Activated CD4-positive, alpha-beta memory T cell treated with anti-CD3 and anti-CD28 coated beads for 36 hours (primary cell): ENCODE measurements at regions of chr5 and their contacts with region 1.

Region 1: GRCh38 chr5:113378959-113379541 is 55.7 kb downstream of the TSSK1B start:
- DNase-seq: peak; percentile 74
- H3K4me3 Mint-ChIP-seq: no peak overlapping the region
- H3K27ac Mint-ChIP-seq: no peak overlapping the region
- H3K4me1 Mint-ChIP-seq: peaks cover 27% of the 10 kb centered on the region
- H3K27me3 Mint-ChIP-seq: peaks cover 5% of the 10 kb centered on the region

Region 2: DNA sequence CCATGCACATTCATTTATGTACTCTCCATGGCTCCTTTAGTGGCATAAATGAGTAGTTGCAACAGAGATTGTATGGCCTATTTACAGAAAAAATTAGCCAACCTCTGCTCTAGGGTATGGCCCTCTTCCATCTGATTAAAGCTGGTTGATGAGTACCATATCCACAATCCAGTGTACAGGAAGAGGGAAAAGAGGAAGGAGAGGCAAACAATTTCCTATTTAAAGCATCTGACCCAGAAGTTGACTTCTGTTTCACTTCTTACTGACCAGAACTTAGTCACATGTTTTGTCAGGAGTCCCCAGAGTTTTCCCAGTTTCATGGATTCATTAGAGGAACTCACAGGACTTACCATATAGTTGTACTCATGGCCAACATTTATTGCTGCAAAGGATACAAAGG is 1798.1 kb before region 1 on chr5:
- CTCF ChIA-PET with region 1: no interaction called
- POLR2A ChIA-PET with region 1: no interaction called
- intact Hi-C with region 1: no loop called
- DNase-seq: no peak
- H3K4me3 Mint-ChIP-seq: no peak overlapping the region
- H3K27ac Mint-ChIP-seq: no peak overlapping the region
- H3K4me1 Mint-ChIP-seq: no peaks in the 10 kb centered on the region
- H3K27me3 Mint-ChIP-seq: peaks cover 11% of the 10 kb centered on the region

Region 3: GRCh38 chr5:113336975-113337374 is 42.1 kb before region 1 on chr5:
- CTCF ChIA-PET with region 1: interaction called, 4 read pairs
- POLR2A ChIA-PET with region 1: no interaction called
- intact Hi-C with region 1: loop called (anchors 2 kb)
- DNase-seq: no peak
- H3K4me3 Mint-ChIP-seq: no peak overlapping the region
- H3K27ac Mint-ChIP-seq: no peak overlapping the region
- H3K4me1 Mint-ChIP-seq: peaks cover 4% of the 10 kb centered on the region
- H3K27me3 Mint-ChIP-seq: no peaks in the 10 kb centered on the region

Region 4: GRCh38 chr5:113390224-113390623 is 11.2 kb after region 1 on chr5:
- CTCF ChIA-PET with region 1: interaction called, 13 read pairs
- POLR2A ChIA-PET with region 1: no interaction called
- intact Hi-C with region 1: no loop called
- DNase-seq: no peak
- H3K4me3 Mint-ChIP-seq: no peak overlapping the region
- H3K27ac Mint-ChIP-seq: no peak overlapping the region
- H3K4me1 Mint-ChIP-seq: no peaks in the 10 kb centered on the region
- H3K27me3 Mint-ChIP-seq: peaks cover 13% of the 10 kb centered on the region

Region 5: GRCh38 chr5:113546703-113547183 is 167.7 kb after region 1 on chr5:
- CTCF ChIA-PET with region 1: no interaction called
- POLR2A ChIA-PET with region 1: no interaction called
- intact Hi-C with region 1: no loop called
- DNase-seq: no peak
- H3K4me3 Mint-ChIP-seq: no peak overlapping the region
- H3K27ac Mint-ChIP-seq: no peak overlapping the region
- H3K4me1 Mint-ChIP-seq: peaks cover 10% of the 10 kb centered on the region
- H3K27me3 Mint-ChIP-seq: no peaks in the 10 kb centered on the region

Region 6: DNA sequence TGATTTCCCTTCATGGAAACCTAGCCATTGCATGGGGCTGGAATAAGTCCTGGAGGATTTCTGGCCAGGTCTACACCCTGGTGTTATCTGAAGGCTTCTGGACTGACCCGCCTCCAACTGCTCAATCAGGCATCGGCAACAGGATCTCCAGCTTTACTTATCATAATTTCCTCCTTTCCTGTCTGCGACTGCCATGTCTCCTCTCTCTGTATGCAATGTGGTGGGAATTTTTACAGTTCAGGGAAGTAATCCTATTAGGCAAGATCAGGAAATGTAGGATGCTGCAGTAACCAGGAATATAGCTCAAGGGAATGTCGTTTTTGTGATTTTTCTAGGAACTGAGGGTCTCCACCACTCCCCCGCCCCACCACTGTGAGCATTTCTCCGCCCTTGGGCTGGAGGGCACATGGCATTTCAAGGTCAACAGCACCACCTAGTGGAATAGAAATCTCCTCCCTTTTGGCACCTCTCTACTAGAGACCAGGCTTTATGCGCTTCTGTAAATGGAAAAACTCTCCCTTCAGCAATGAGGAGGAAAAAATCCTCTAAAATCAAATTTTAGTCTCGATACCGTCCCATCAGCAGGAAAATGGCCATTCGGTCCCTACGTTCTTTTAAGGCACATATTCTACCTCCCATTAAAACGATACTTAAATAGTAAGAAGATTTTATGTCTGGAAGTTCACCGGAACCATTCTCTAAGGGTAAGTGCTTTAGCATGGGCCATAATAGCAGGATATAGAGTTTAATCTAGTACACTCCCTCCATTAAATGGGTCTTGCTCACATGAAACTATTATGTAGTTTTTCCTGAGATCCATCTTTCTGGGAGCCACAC is 227.5 kb after region 1 on chr5:
- CTCF ChIA-PET with region 1: interaction called, 15 read pairs
- POLR2A ChIA-PET with region 1: no interaction called
- intact Hi-C with region 1: loop called (anchors 1 kb)
- DNase-seq: peak; percentile 44
- H3K4me3 Mint-ChIP-seq: no peak overlapping the region
- H3K27ac Mint-ChIP-seq: no peak overlapping the region
- H3K4me1 Mint-ChIP-seq: peaks cover 3% of the 10 kb centered on the region
- H3K27me3 Mint-ChIP-seq: peaks cover 12% of the 10 kb centered on the region